Endothelial cell of umbilical vein (primary cell): ENCODE measurements at regions of chrX and their contacts with region 1.

Region 1: DNA sequence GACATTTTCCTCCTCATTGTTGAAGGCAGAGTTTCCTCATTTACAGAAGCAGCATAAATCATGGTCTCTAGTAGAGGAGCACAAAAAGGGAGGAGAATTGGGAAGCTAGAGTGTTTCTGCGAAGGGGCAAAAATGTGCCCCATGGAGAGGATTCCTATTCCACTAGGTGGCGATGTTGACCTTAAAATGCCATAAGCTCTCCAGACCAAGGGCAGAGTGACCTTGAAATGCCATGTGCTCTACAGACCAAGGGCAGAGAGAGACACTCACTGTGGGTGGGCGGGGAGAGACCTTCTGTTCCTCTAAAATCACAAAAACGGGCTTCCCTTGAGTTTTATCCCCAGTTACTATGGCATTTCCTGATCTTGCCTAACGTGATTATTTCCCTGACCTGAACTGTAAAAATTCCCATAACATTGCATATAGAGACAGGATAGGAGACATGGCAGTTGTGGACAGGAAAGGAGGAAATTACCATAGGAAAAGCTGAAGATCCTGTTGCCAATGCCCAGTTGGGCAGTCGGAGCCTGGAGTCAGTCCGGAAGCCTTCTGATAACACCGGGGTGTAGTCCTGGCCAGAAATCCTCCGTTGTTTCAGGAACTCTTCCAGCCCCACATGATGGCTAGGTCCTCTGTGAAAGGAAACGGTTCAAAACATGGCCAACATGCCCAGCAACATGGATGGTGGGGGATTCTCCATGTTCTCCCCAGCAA is 567.7 kb downstream of the MAGEB5 start:
- DNase-seq: peak; percentile 87
- H3K4me3 ChIP-seq: no peak overlapping the region
- H3K27ac ChIP-seq: peak overlapping the region; percentile 87
- H3K4me1 ChIP-seq: peaks cover 19% of the 10 kb centered on the region
- H3K27me3 ChIP-seq: no peaks in the 10 kb centered on the region
- CTCF ChIP-seq: peak; percentile 33 to 50
- POLR2A ChIP-seq: no peak

Region 2: GRCh38 chrX:25941087-25941486 is 842.6 kb before region 1 on chrX:
- CTCF ChIA-PET with region 1: no interaction called
- POLR2A ChIA-PET with region 1: no interaction called
- dilution Hi-C with region 1: no loop called
- intact Hi-C with region 1: loop called (anchors 2 kb)
- DNase-seq: peak; percentile 61
- H3K4me3 ChIP-seq: peak overlapping the region in 1 of 3 experiments; percentile 43
- H3K27ac ChIP-seq: peak overlapping the region; percentile 96
- H3K4me1 ChIP-seq: peaks cover 27% of the 10 kb centered on the region
- H3K27me3 ChIP-seq: no peaks in the 10 kb centered on the region
- CTCF ChIP-seq: no peak
- POLR2A ChIP-seq: no peak

Region 3: DNA sequence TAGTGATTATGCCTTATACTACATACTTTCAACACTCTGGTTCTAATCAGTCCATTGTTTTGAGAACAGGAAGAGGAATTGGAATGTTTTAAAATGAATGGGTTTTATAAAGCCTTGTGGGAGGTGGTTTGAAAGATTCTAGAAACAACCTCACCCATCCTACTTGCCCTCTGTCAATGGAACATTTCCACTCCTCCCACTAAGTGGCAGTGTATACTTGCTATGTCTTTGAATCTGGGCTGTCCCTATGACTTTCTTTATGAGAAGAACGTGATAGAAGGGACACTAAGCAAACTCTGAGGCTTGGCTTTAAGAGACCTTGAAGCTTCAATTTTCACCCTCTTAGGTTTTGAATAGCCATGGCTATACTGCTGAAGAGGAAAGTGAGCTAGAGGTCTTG is 68.3 kb after region 1 on chrX:
- CTCF ChIA-PET with region 1: interaction called, 11 read pairs
- POLR2A ChIA-PET with region 1: no interaction called
- dilution Hi-C with region 1: no loop called
- intact Hi-C with region 1: loop called (anchors 1 kb)
- DNase-seq: peak; percentile 87
- H3K4me3 ChIP-seq: no peak overlapping the region
- H3K27ac ChIP-seq: peak overlapping the region; percentile 18
- H3K4me1 ChIP-seq: peaks cover 10% of the 10 kb centered on the region
- H3K27me3 ChIP-seq: no peaks in the 10 kb centered on the region
- CTCF ChIP-seq: peak; percentile 6 to 12
- POLR2A ChIP-seq: no peak

Region 4: DNA sequence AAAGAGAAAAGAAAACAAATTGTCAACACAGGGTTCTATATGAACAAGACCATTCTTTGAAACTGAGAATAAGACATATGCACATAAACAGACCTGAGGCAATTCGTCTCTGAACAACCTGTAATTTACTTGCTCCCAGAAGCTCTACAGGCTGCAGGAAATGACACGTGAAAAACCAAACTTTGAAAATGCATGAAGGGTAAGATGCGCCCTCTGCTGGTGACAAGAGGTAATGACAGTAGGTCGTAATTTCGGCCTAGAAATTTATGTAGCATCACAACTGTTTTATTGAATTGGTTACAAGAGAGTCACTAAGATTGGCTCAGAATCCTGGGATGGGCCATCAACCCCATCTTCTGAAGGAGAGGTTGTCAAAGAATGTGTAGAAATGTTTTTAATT is 403.0 kb after region 1 on chrX:
- CTCF ChIA-PET with region 1: interaction called, 13 read pairs
- POLR2A ChIA-PET with region 1: no interaction called
- dilution Hi-C with region 1: no loop called
- intact Hi-C with region 1: no loop called
- DNase-seq: peak; percentile 28
- H3K4me3 ChIP-seq: no peak overlapping the region
- H3K27ac ChIP-seq: no peak overlapping the region
- H3K4me1 ChIP-seq: no peaks in the 10 kb centered on the region
- H3K27me3 ChIP-seq: no peaks in the 10 kb centered on the region
- CTCF ChIP-seq: peak; percentile 48 to 49
- POLR2A ChIP-seq: no peak

Region 5: DNA sequence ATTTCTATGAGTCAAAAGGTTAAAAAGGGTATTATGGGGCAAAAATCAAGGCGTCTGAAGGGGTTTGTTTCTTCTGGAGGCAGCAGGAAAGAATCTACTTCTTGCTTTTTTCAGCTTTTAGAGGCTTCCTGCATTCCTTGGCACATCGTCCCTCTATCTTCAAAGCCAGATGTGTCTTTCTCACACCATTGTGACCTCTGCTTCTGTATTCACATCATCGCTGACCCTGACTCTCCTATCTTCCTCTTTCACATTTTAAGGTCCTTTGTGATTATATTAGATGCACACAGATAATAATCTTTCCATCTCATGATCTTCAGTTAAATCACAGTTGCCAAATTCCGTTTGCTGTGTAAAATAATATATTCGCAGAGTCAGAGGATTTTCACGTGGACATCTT is 566.8 kb after region 1 on chrX:
- CTCF ChIA-PET with region 1: no interaction called
- POLR2A ChIA-PET with region 1: no interaction called
- dilution Hi-C with region 1: no loop called
- intact Hi-C with region 1: loop called (anchors 5 kb)
- DNase-seq: peak; percentile 89
- H3K4me3 ChIP-seq: no peak overlapping the region
- H3K27ac ChIP-seq: no peak overlapping the region
- H3K4me1 ChIP-seq: peaks cover 14% of the 10 kb centered on the region
- H3K27me3 ChIP-seq: no peaks in the 10 kb centered on the region
- CTCF ChIP-seq: no peak
- POLR2A ChIP-seq: no peak

Region 6: GRCh38 chrX:27619975-27620374 is 836.3 kb after region 1 on chrX:
- CTCF ChIA-PET with region 1: interaction called, 10 read pairs
- POLR2A ChIA-PET with region 1: interaction called, 4 read pairs
- dilution Hi-C with region 1: no loop called
- intact Hi-C with region 1: loop called (anchors 1 kb)
- DNase-seq: peak; percentile 53
- H3K4me3 ChIP-seq: no peak overlapping the region
- H3K27ac ChIP-seq: peak overlapping the region; percentile 65
- H3K4me1 ChIP-seq: peaks cover 15% of the 10 kb centered on the region
- H3K27me3 ChIP-seq: no peaks in the 10 kb centered on the region
- CTCF ChIP-seq: peak; percentile 13 to 18
- POLR2A ChIP-seq: no peak

Region 7: DNA sequence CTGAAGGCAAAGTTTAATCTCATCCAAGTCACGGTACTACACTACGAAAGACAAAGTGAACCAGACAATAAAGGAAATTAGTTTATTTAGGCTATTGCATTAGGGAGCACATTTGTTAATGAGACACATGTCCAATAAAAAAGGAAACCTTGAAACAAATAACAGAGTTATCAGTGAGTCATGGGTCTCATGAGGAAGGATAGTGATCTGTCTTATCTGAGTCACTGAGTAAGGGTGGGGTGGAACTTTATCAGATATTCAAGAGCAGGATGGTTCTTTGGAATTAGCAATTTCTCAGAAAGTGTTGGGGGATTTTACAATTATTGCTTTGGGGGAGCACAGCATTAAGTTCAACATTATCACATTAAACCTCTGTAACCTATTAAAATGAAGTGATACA is 1614.7 kb after region 1 on chrX:
- CTCF ChIA-PET with region 1: no interaction called
- POLR2A ChIA-PET with region 1: no interaction called
- dilution Hi-C with region 1: no loop called
- intact Hi-C with region 1: loop called (anchors 5 kb)
- DNase-seq: peak; percentile 30
- H3K4me3 ChIP-seq: no peak overlapping the region
- H3K27ac ChIP-seq: peak overlapping the region; percentile 51
- H3K4me1 ChIP-seq: peaks cover 14% of the 10 kb centered on the region
- H3K27me3 ChIP-seq: no peaks in the 10 kb centered on the region
- CTCF ChIP-seq: no peak
- POLR2A ChIP-seq: no peak